K562 (cell line): ENCODE measurements at regions of chr9 and their contacts with region 1.

Region 1: DNA sequence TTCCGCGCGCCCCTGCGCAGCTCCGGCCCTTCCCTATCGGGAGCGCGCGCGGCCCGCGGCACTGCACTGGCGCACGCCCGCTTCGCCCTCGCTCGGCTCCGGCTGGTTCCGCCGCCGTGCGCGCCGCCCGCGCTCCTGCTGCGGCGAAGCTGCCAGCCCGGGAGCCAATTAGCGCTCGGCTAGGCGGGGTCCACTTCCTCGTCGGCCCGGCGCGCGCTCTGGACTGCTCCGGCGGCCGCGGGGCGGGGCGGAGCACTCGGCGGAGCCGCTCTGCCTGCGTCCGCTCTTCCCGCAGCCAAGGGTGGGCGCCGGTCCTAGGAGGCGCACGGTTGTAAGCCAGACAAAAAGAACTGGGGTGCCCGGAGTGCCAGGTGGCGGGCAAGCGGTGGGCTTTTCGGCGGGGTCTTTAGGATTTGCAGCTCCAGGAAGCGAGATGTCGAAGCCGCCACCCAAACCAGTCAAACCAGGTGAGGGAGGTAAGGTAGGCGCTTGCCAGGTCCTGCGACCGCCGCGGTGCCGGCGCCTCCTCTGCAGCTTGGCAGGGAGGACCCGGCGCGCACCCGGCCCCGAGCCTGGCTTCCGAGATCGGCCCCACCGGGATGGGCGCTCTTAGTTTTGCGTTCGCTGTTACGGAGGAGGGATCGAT is at the start of gene OSTF1:
- DNase-seq: peak; percentile 86 to 93 (median 88)
- ATAC-seq: peak; percentile 93
- H3K4me3 ChIP-seq: peak within 1 kb of the TSS; percentile 86
- H3K27ac ChIP-seq: peak within 1 kb of the TSS; percentile 75
- H3K4me1 ChIP-seq: peaks cover 15 to 26% of the 10 kb centered on the region in 2 experiments; a peak in 4 of 5 replicates
- H3K27me3 ChIP-seq: no peaks in the 10 kb centered on the region
- CTCF ChIP-seq: no peak
- EP300 ChIP-seq: no peak
- POLR2A ChIP-seq: peak; percentile 70
- RAD21 ChIP-seq: no peak
- polyA plus RNA-seq, gene OSTF1: 15.0 to 23.0 TPM

Region 2: GRCh38 chr9:75027187-75028107 is 60.9 kb before region 1 on chr9:
- CTCF ChIA-PET with region 1: no interaction called
- POLR2A ChIA-PET with region 1: interaction called, 5 read pairs
- in situ Hi-C with region 1: no loop called
- intact Hi-C with region 1: loop called (anchors 5 kb)
- DNase-seq: peak; percentile 63 to 81 (median 69)
- ATAC-seq: peak; percentile 83
- H3K4me3 ChIP-seq: peak overlapping the region; percentile 63
- H3K27ac ChIP-seq: peak overlapping the region; percentile 93
- H3K4me1 ChIP-seq: peaks cover 3 to 15% of the 10 kb centered on the region in 2 experiments; a peak in 4 of 5 replicates
- H3K27me3 ChIP-seq: no peaks in the 10 kb centered on the region
- CTCF ChIP-seq: peak in 2 of 3 experiments; percentile 29 to 46; a peak in 4 of 6 replicates
- EP300 ChIP-seq: 0 out of 2 replicates have a peak, but pooled peaks have one; percentile 1
- POLR2A ChIP-seq: 0 out of 2 replicates have a peak, but pooled peaks have one; percentile 9
- RAD21 ChIP-seq: no peak

Region 3: GRCh38 chr9:75185585-75186170 is 97.3 kb after region 1 on chr9:
- CTCF ChIA-PET with region 1: no interaction called
- POLR2A ChIA-PET with region 1: no interaction called
- in situ Hi-C with region 1: no loop called
- intact Hi-C with region 1: loop called (anchors 5 kb)
- DNase-seq: peak; percentile 12 to 56 (median 16)
- ATAC-seq: peak; percentile 90
- H3K4me3 ChIP-seq: no peak overlapping the region
- H3K27ac ChIP-seq: no peak overlapping the region
- H3K4me1 ChIP-seq: no peaks in the 10 kb centered on the region; a peak in 1 of 5 replicates
- H3K27me3 ChIP-seq: no peaks in the 10 kb centered on the region
- CTCF ChIP-seq: peak; percentile 61 to 66 (median 64)
- EP300 ChIP-seq: no peak
- POLR2A ChIP-seq: no peak
- RAD21 ChIP-seq: peak in 1 of 2 experiments; percentile 19; a peak in 1 of 4 replicates